A549 (cell line): ENCODE measurements at regions of chr20 and their contacts with region 1.

Region 1: DNA sequence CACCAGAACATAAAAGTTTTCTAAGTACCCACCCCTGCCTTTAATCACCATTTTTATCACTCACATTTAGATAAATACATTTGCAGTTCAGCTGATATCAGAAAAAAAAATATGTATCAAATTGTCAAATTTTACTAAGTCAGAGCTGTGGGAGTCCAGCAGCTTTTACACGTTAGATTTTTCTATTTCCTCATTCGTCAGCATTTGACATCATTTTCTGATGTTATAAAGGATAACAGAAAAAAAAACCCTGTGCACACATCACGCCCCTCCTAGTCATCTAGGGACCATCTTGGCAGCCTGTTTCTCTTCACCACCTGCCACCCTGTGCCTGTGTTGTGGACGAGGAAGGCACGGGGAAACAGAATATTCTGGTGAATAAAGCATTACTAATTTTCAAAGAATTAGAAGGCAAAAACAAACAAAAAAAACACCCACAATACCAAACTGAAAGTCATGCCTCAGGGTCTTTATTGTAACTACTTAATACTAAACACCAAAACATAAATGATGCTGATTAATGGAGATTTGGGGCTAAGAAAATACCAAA is 12.4 kb downstream of the B4GALT5 start:
- DNase-seq: peak in 1 of 2 experiments; percentile 86
- ATAC-seq: peak; percentile 69 to 76
- H3K4me3 ChIP-seq: peak overlapping the region; percentile 14; the same call in 2 of the 3 replicates
- H3K27ac ChIP-seq: peak overlapping the region; percentile 98
- H3K4me1 ChIP-seq: peaks cover 93% of the 10 kb centered on the region
- CTCF ChIP-seq: no peak
- EP300 ChIP-seq: peak; percentile 58 to 75; a peak in 2 of 5 replicates
- POLR2A ChIP-seq: no peak
- RAD21 ChIP-seq: 0 out of 5 replicates have a peak, but pooled peaks of 1 of the 2 experiments have one; percentile 19

Region 2: GRCh38 chr20:49712996-49713752 is 11.9 kb after region 1 on chr20:
- CTCF ChIA-PET with region 1: interaction called, 11 read pairs
- POLR2A ChIA-PET with region 1: interaction called, 4 read pairs
- DNase-seq: peak in 1 of 2 experiments; percentile 27
- ATAC-seq: peak; percentile 68 to 81
- H3K4me3 ChIP-seq: peak overlapping the region; percentile 84
- H3K27ac ChIP-seq: peak overlapping the region; percentile 97 to 98
- H3K4me1 ChIP-seq: peaks cover 56% of the 10 kb centered on the region
- CTCF ChIP-seq: no peak
- EP300 ChIP-seq: peak in 1 of 2 experiments; percentile 12; a peak in 1 of 5 replicates
- POLR2A ChIP-seq: no peak
- RAD21 ChIP-seq: no peak

Region 3: GRCh38 chr20:49739042-49739441 is 37.7 kb after region 1 on chr20:
- CTCF ChIA-PET with region 1: no interaction called
- POLR2A ChIA-PET with region 1: no interaction called
- DNase-seq: no peak
- ATAC-seq: no peak
- H3K4me3 ChIP-seq: no peak overlapping the region
- H3K27ac ChIP-seq: peak overlapping the region in 1 of 2 experiments; percentile 45; a peak in 3 of 6 replicates
- H3K4me1 ChIP-seq: no peaks in the 10 kb centered on the region
- CTCF ChIP-seq: no peak
- EP300 ChIP-seq: no peak
- POLR2A ChIP-seq: no peak
- RAD21 ChIP-seq: no peak